K562 (cell line): ENCODE measurements at regions of chr10 and their contacts with region 1.

Region 1: GRCh38 chr10:37976091-37976879 is at the start of gene ZNF25:
- DNase-seq: peak; percentile 95 to 98 (median 97)
- ATAC-seq: peak; percentile 99
- H3K4me3 ChIP-seq: peak within 1 kb of the TSS; percentile 76
- H3K27ac ChIP-seq: peak within 1 kb of the TSS; percentile 88
- H3K4me1 ChIP-seq: peaks cover 4 to 10% of the 10 kb centered on the region in 2 experiments; a peak in 3 of 5 replicates
- H3K27me3 ChIP-seq: no peaks in the 10 kb centered on the region
- CTCF ChIP-seq: peak; percentile 96
- EP300 ChIP-seq: no peak; the same call in 1 of the 2 replicates
- POLR2A ChIP-seq: peak; percentile 86
- RAD21 ChIP-seq: peak; percentile 45 to 70; a peak in 3 of 4 replicates
- polyA plus RNA-seq, gene ZNF25: 0.62 to 1.1 TPM

Region 2: GRCh38 chr10:38010119-38010903 is 34.0 kb after region 1 on chr10 and contains the start of gene ZNF33A:
- CTCF ChIA-PET with region 1: no interaction called
- POLR2A ChIA-PET with region 1: interaction called, 3 read pairs
- in situ Hi-C with region 1: no loop called
- intact Hi-C with region 1: loop called (anchors 1 kb)
- DNase-seq: peak; percentile 77 to 93 (median 81)
- ATAC-seq: peak; percentile 90
- H3K4me3 ChIP-seq: peak within 1 kb of the TSS; percentile 67
- H3K27ac ChIP-seq: peak within 1 kb of the TSS; percentile 96
- H3K4me1 ChIP-seq: peaks cover 4 to 5% of the 10 kb centered on the region in 2 experiments; a peak in 2 of 5 replicates
- H3K27me3 ChIP-seq: no peaks in the 10 kb centered on the region
- CTCF ChIP-seq: no peak; a peak in 1 of 6 replicates
- EP300 ChIP-seq: no peak
- POLR2A ChIP-seq: no peak; the same call in none of the 2 replicates
- RAD21 ChIP-seq: no peak
- polyA plus RNA-seq, gene ZNF33A: 12.7 TPM